Calu3 (cell line): ENCODE measurements at regions of chr2 and their contacts with region 1.

Region 1: DNA sequence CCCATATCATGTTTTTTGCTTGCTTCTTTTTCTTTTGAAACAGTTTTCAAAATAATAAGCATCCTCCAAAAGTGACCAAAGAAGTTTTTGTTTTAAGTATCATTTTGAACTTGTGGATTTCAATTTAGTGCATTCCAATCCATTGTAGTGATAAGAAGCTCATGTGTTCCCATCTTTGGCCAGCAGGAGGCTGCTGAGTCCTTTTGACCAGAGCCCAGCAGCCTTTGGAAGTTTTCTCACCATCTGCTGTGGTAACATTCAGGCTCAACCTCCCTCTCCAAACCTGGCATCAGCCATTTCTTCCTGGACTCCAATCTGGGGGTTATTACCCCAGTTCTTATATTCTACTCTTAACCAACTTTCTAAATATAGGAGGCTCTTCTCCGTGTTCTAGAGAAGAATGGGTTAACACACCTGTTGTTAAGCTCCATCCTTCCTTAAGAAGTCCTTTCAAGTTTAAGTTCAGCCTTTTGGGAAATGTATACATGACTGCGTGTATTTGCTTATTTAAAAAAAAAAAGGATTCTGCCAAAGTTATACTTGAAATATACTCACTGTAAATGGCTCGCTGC is 39.0 kb upstream of the MAL start:
- DNase-seq: peak; percentile 64
- H3K4me3 Mint-ChIP-seq: no peak overlapping the region
- H3K27ac Mint-ChIP-seq: no peak overlapping the region
- H3K4me1 Mint-ChIP-seq: no peaks in the 10 kb centered on the region
- H3K27me3 Mint-ChIP-seq: peaks cover 74% of the 10 kb centered on the region
- CTCF ChIP-seq: peak; percentile 56

Region 2: GRCh38 chr2:94725543-94725942 is 260.9 kb before region 1 on chr2:
- CTCF ChIA-PET with region 1: no interaction called
- intact Hi-C with region 1: no loop called
- DNase-seq: no peak
- H3K4me3 Mint-ChIP-seq: no peak overlapping the region
- H3K27ac Mint-ChIP-seq: no peak overlapping the region
- H3K4me1 Mint-ChIP-seq: no peaks in the 10 kb centered on the region
- H3K27me3 Mint-ChIP-seq: no peaks in the 10 kb centered on the region
- CTCF ChIP-seq: no peak

Region 3: GRCh38 chr2:94762599-94762998 is 223.9 kb before region 1 on chr2:
- CTCF ChIA-PET with region 1: no interaction called
- intact Hi-C with region 1: no loop called
- DNase-seq: no peak
- H3K4me3 Mint-ChIP-seq: no peak overlapping the region
- H3K27ac Mint-ChIP-seq: no peak overlapping the region
- H3K4me1 Mint-ChIP-seq: no peaks in the 10 kb centered on the region
- H3K27me3 Mint-ChIP-seq: peaks cover 20% of the 10 kb centered on the region
- CTCF ChIP-seq: no peak

Region 4: GRCh38 chr2:95076784-95077529 is 90.5 kb after region 1 on chr2:
- CTCF ChIA-PET with region 1: interaction called, 7 read pairs
- intact Hi-C with region 1: loop called (anchors 1 kb)
- DNase-seq: peak; percentile 95
- H3K4me3 Mint-ChIP-seq: peak overlapping the region; percentile 69
- H3K27ac Mint-ChIP-seq: no peak overlapping the region
- H3K4me1 Mint-ChIP-seq: peaks cover 10% of the 10 kb centered on the region
- H3K27me3 Mint-ChIP-seq: peaks cover 27% of the 10 kb centered on the region
- CTCF ChIP-seq: peak; percentile 88

Region 5: GRCh38 chr2:95115418-95115817 is 128.9 kb after region 1 on chr2:
- CTCF ChIA-PET with region 1: interaction called, 9 read pairs
- intact Hi-C with region 1: loop called (anchors 10 kb)
- DNase-seq: peak; percentile 71
- H3K4me3 Mint-ChIP-seq: no peak overlapping the region
- H3K27ac Mint-ChIP-seq: no peak overlapping the region
- H3K4me1 Mint-ChIP-seq: peaks cover 17% of the 10 kb centered on the region
- H3K27me3 Mint-ChIP-seq: no peaks in the 10 kb centered on the region
- CTCF ChIP-seq: peak; percentile 65